ENCODE measurements at regions of chr21 and their contacts with region 1.

Region 1: DNA sequence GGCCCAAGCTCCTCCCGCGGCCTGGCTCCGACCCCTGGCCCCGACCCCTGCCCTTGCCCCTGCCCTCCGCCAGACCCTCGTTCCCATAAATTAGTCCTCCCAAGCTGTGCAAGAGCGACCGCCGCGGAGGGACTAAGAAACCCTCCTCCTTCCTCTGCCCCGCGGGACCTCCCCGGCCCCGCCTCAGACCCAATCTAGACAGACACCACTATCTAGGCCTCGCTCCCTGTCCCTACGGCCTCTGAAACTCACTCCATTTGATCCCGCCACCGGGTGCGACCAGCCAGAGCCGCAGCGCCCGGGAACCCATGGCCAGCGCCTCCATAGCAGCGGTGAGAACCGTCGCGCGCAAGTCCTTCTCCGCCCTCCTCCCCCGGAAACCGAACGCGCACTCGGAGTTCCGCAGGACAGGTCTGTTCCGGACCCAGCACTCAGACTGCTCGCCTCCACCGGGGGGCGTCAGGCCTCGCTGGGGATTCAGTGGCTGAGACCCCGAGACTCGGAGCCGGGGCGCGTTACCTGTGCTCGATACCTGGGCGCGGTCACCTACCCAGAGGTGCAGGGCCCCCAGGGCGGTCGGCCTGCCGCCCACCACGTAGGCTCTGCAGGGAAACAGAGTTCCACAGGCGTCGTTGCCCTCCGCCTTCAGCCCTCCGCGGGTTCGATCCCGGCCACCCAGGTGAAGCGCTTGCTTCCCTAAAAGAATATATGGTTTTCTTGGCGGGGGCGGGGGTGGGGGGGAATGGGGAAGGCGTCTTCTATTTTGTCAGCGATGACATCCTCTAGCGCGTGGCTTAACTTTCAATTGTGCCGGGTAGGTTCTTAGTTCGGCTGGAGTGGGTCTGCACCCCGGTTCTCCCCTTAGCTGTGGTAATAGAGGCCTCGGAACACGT is at the start of gene MRPL39:
- DNase-seq: peak; percentile 62 to 87
- H3K4me3 ChIP-seq: peak within 1 kb of the TSS; percentile 62 to 98 (median 86)
- H3K27ac ChIP-seq: peak within 1 kb of the TSS; percentile 87 to 94
- H3K4me1 ChIP-seq: peaks cover 0 to 3% of the 10 kb centered on the region in 2 donors
- H3K27me3 ChIP-seq: no peaks in the 10 kb centered on the region
- CTCF ChIP-seq: peak; percentile 10 to 45 (median 42)
- POLR2A ChIP-seq: no peak
- total RNA-seq, gene MRPL39: 13.0 to 28.2 (median 26.5) TPM

Region 2: DNA sequence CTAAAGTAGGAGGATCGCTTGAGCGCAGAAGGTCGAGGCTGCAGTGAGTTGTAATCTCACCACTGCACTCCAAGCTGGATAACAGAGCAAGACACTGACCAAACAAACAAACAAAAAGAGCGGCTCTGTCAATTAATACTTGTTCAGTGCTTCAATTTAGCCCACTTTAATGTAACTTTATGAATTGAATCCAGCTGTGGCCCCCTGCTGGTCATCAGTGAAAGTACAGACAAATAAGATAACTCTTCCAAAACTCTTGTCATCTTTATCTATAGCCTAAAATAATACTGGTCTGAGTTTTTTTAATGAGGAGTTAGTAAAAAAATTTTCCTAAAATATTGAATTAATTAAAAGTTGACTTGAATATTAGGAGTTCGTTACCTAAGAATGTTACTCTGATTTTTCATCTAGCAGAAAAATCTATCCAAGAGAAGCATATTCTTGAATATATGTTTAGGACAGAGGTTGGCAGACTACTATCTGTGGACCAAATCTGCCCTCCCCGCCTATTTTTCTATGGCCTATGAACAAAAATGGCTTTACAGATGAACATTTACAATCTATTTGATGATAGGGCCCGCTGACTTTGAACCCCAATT is 101.2 kb after region 1 on chr21:
- intact Hi-C with region 1: loop called (anchors 10 kb)
- DNase-seq: no peak
- H3K4me3 ChIP-seq: no peak overlapping the region
- H3K27ac ChIP-seq: no peak overlapping the region
- H3K4me1 ChIP-seq: no peaks in the 10 kb centered on the region
- H3K27me3 ChIP-seq: no peaks in the 10 kb centered on the region
- CTCF ChIP-seq: peak; percentile 67 to 78 (median 70)
- POLR2A ChIP-seq: no peak

Region 3: DNA sequence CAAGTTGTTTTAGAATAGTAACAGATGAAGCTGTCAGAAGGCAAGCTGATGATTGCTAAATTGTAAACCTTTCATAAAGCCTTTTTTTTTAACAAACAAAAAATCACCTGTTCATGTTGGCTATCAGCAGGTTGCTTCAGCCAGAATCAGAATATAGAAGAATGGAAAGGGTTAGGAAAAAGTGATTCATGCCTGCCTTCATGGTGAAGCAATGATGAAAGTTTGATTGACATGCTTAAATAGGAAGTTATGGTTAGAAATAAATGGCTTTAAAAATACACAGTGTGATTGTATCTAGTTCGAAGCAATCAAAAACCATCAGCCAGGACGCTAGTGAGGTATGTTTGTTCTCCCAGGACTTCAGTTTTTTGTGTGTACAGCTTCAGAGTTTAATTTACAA is 165.3 kb after region 1 on chr21:
- intact Hi-C with region 1: no loop called
- DNase-seq: no peak
- H3K4me3 ChIP-seq: no peak overlapping the region
- H3K27ac ChIP-seq: no peak overlapping the region
- H3K4me1 ChIP-seq: no peaks in the 10 kb centered on the region
- H3K27me3 ChIP-seq: no peaks in the 10 kb centered on the region
- CTCF ChIP-seq: no peak
- POLR2A ChIP-seq: no peak